ENCODE measurements at regions of chr10 and their contacts with region 1.

Region 1: GRCh38 chr10:97827778-97828291 is 21.8 kb upstream of the GOLGA7B start:
- DNase-seq: no peak
- ATAC-seq: peak; percentile 66
- H3K4me3 ChIP-seq: no peak overlapping the region
- H3K27ac ChIP-seq: no peak overlapping the region
- H3K4me1 ChIP-seq: no peaks in the 10 kb centered on the region; the same call in 1 of the 2 replicates
- H3K27me3 ChIP-seq: no peaks in the 10 kb centered on the region; the same call in 1 of the 2 replicates
- CTCF ChIP-seq: no peak

Region 2: DNA sequence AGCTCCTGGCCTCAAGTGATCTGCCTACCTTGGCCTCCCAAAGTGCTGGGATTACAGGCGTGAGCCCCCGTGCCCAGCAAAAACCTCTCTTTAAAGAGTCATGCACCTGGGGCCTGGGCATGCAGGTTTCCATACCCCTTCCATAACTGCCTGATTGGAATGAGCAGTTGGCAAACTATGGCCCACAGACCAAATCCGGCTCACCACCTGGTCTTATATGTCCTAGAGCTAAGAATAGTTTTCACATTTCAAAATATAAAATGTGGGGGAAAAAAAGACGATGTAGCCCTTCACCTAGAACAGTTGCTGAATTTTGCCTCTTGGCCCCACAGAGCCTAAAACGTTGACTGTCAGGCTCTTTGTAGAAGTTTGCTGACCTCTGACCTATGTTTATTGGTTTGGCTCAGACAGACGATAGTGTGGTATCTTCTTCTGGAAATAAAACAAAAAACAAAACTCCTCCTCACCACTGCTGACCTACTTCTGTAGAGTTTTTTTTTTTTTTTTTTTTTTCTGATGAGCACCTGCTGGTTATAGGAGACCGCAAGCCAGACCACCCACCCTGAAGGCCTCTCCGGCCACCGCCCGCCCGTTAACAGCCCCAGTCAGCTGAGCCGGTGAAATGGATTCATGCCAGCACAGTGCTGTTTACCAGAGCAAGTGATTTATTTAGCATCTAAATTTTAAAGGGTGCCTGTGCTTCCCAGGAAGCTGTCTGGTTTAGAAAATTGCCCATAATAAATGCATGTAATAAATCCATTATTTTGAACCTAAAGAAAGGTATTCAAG is 22.5 kb before region 1 on chr10:
- CTCF ChIA-PET with region 1: no interaction called
- POLR2A ChIA-PET with region 1: interaction called, 17 read pairs
- in situ Hi-C with region 1: no loop called
- intact Hi-C with region 1: no loop called
- DNase-seq: no peak
- ATAC-seq: no peak
- H3K4me3 ChIP-seq: no peak overlapping the region
- H3K27ac ChIP-seq: no peak overlapping the region
- H3K4me1 ChIP-seq: no peaks in the 10 kb centered on the region
- H3K27me3 ChIP-seq: no peaks in the 10 kb centered on the region
- CTCF ChIP-seq: no peak

Region 3: GRCh38 chr10:98006266-98006665 is 178.4 kb after region 1 on chr10:
- CTCF ChIA-PET with region 1: no interaction called
- POLR2A ChIA-PET with region 1: no interaction called
- in situ Hi-C with region 1: no loop called
- intact Hi-C with region 1: no loop called
- DNase-seq: no peak
- ATAC-seq: no peak
- H3K4me3 ChIP-seq: no peak overlapping the region
- H3K27ac ChIP-seq: no peak overlapping the region
- H3K4me1 ChIP-seq: no peaks in the 10 kb centered on the region
- H3K27me3 ChIP-seq: peaks cover 29% of the 10 kb centered on the region
- CTCF ChIP-seq: no peak